GM12878 (cell line): ENCODE measurements at regions of chr6 and their contacts with region 1.

Region 1: DNA sequence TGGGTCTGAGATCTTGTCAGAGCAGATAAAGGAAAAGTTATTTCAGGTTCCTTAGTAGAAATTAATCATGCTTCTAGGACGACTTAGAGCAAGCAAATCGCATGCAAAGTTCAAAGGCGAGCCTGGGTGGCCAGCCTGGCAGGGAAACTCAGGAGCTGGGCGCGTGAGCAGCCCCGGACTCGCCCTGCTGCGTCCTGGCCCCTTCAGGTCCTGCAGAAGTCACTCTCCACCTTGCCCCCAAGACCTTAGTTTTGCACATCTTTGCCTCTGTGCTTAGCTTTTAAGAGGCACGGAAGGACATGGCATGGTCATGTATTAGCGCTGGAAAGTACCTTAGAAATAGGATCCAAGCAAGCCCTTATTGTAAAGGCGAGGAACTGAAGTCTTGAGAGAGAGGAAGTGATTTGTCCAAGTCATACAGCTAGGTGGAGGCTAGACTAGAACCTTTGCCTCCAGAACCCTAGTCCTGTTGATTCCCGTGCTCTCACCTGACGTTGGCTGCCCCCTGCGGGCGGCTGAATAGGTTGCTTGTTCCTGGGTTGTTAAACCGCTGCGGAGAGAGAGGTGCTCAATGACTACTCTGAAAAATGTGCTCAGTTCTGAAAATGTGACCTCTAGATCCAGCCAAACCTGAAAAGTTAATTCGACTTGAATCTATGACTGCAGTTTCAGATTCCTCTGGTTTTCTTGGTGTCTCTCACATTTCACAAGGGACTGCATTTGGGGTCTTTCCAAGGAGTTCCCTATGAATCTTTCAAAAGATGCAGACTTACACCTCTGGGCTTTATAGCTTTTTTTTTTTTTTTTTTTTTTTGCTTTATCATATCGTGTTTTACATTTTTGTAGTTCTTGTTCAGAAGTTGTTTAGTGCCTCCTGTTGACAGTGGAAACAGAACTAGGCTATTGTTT is 2.7 kb downstream of the MYB start:
- DNase-seq: no peak
- ATAC-seq: peak; percentile 62
- H3K4me3 ChIP-seq: peak overlapping the region; percentile 89
- H3K27ac ChIP-seq: peak overlapping the region; percentile 99
- H3K4me1 ChIP-seq: peaks cover 16% of the 10 kb centered on the region
- H3K27me3 ChIP-seq: no peaks in the 10 kb centered on the region
- CTCF ChIP-seq: peak; percentile 71 to 91 (median 79); a peak in 5 of 6 replicates
- EP300 ChIP-seq: no peak; a peak in 1 of 4 replicates
- POLR2A ChIP-seq: peak; percentile 12
- RAD21 ChIP-seq: peak; percentile 90

Region 2: GRCh38 chr6:135008072-135008940 is 175.5 kb before region 1 on chr6:
- CTCF ChIA-PET with region 1: interaction called, 12 read pairs
- POLR2A ChIA-PET with region 1: interaction called, 4 read pairs
- RAD21 ChIA-PET with region 1: interaction called, 14 read pairs
- SMC1A ChIA-PET with region 1: interaction called, 25 read pairs
- in situ Hi-C with region 1: loop called (anchors 5 kb)
- intact Hi-C with region 1: loop called (anchors 2 kb)
- DNase-seq: peak; percentile 56
- ATAC-seq: peak; percentile 91
- H3K4me3 ChIP-seq: 0 out of 2 replicates have a peak overlapping the region, but pooled peaks have one; percentile 16
- H3K27ac ChIP-seq: peak overlapping the region; percentile 64
- H3K4me1 ChIP-seq: peaks cover 28% of the 10 kb centered on the region
- H3K27me3 ChIP-seq: no peaks in the 10 kb centered on the region
- CTCF ChIP-seq: no peak
- EP300 ChIP-seq: peak; percentile 43 to 66; a peak in 2 of 4 replicates
- POLR2A ChIP-seq: no peak
- RAD21 ChIP-seq: no peak

Region 3: GRCh38 chr6:135054569-135055498 is 129.0 kb before region 1 on chr6 and contains the start of gene HBS1L:
- CTCF ChIA-PET with region 1: interaction called, 14 read pairs
- POLR2A ChIA-PET with region 1: interaction called, 8 read pairs
- RAD21 ChIA-PET with region 1: interaction called, 5 read pairs
- SMC1A ChIA-PET with region 1: interaction called, 8 read pairs
- in situ Hi-C with region 1: no loop called
- intact Hi-C with region 1: loop called (anchors 5 kb)
- DNase-seq: peak; percentile 98
- ATAC-seq: peak; percentile 98
- H3K4me3 ChIP-seq: peak within 1 kb of the TSS; percentile 89
- H3K27ac ChIP-seq: peak within 1 kb of the TSS; percentile 94
- H3K4me1 ChIP-seq: no peaks in the 10 kb centered on the region
- H3K27me3 ChIP-seq: no peaks in the 10 kb centered on the region
- CTCF ChIP-seq: no peak
- EP300 ChIP-seq: no peak; a peak in 1 of 4 replicates
- POLR2A ChIP-seq: peak; percentile 96
- RAD21 ChIP-seq: no peak
- polyA plus RNA-seq, gene HBS1L: 58.7 to 83.6 TPM

Region 4: DNA sequence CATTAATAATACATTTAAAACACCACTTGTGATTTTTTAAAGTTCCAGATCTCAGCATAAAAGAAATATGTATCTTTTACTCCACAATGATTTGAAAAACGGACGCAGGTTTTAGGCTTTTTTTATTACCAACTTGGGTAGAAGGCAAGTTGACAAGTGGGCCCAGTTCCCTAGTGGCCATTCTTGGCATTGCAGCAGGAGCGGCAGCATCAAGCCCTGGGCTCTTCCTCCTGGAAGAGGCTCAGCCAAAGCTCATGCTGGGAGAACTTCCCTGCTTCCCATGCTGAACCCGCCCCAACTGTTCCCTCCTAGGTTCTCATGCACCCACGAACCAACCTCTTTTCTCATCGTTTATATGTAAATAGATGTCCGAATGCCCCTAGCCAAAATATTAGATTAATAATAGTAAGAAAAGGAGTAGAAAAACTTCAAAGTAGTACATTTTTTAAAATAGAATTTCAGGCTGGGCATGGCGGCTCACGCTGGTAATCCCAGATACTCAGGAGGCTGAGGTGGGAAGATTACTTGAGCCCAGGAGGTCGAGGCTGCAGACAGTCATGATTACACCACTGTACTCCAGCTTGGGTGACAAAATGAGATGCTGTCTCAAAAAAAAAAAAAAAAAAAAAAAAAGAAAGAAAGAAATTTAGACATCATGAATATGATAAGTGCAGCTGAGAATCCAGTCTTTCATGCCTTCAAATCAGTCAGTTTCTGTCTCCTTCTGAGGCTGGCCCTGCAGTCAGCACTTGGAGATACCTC is 20.9 kb before region 1 on chr6:
- CTCF ChIA-PET with region 1: interaction called, 128 read pairs
- POLR2A ChIA-PET with region 1: interaction called, 52 read pairs
- RAD21 ChIA-PET with region 1: interaction called, 98 read pairs
- SMC1A ChIA-PET with region 1: interaction called, 55 read pairs
- in situ Hi-C with region 1: no loop called
- intact Hi-C with region 1: loop called (anchors 1 kb)
- DNase-seq: no peak
- ATAC-seq: peak; percentile 65
- H3K4me3 ChIP-seq: peak overlapping the region; percentile 49; the same call in 1 of the 2 replicates
- H3K27ac ChIP-seq: peak overlapping the region; percentile 75
- H3K4me1 ChIP-seq: peaks cover 28% of the 10 kb centered on the region
- H3K27me3 ChIP-seq: no peaks in the 10 kb centered on the region
- CTCF ChIP-seq: peak; percentile 64 to 93 (median 93)
- EP300 ChIP-seq: no peak
- POLR2A ChIP-seq: no peak; the same call in 1 of the 2 replicates
- RAD21 ChIP-seq: peak; percentile 51

Region 5: DNA sequence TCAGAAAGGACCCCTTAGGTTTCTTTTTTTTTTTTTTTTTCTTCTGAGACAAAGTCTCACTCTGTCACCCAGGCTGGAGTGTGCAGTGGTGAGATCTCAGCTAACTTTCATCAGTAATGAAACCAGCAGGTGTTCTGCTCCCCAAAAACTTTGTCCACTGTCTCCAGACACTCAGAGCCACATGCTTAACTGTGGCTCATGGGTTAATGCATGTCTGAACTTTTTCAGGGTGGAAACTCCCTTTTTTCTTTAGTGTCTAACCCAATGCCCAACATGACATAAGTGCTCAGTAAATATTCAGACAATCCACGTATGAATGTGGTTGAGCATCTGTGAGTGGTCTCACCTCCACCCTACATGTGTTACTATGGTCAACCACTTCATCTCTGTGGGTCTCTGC is 42.8 kb after region 1 on chr6:
- CTCF ChIA-PET with region 1: interaction called, 5 read pairs
- POLR2A ChIA-PET with region 1: no interaction called
- RAD21 ChIA-PET with region 1: interaction called, 4 read pairs
- SMC1A ChIA-PET with region 1: interaction called, 4 read pairs
- in situ Hi-C with region 1: no loop called
- intact Hi-C with region 1: loop called (anchors 1 kb)
- DNase-seq: peak; percentile 66
- ATAC-seq: peak; percentile 83
- H3K4me3 ChIP-seq: no peak overlapping the region
- H3K27ac ChIP-seq: no peak overlapping the region
- H3K4me1 ChIP-seq: peaks cover 26% of the 10 kb centered on the region
- H3K27me3 ChIP-seq: no peaks in the 10 kb centered on the region
- CTCF ChIP-seq: no peak
- EP300 ChIP-seq: peak; percentile 76 to 79; a peak in 3 of 4 replicates
- POLR2A ChIP-seq: no peak
- RAD21 ChIP-seq: 0 out of 2 replicates have a peak, but pooled peaks have one; percentile 4

Region 6: DNA sequence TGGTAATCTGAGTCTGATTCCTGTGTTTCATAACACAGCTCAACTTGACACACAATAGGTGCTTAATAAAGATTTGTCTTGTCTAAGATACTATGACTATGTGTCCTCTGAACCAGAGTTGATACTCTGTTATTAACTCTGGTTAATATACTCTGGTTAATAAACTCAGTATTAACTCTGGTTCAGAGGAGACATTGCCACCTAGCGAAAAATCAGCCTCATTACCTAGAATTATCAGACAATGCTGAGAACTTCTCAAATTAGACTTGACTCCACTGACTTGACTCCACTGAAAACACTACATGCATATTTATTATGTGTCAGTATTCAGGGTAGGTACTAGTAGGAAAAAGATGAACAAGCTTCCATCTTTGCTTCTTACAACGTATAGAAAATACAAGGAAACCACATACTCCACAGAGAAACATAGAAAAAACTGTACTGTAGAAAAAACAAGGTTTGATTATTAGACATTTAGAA is 239.9 kb after region 1 on chr6:
- CTCF ChIA-PET with region 1: interaction called, 16 read pairs
- POLR2A ChIA-PET with region 1: no interaction called
- RAD21 ChIA-PET with region 1: interaction called, 4 read pairs
- SMC1A ChIA-PET with region 1: interaction called, 22 read pairs
- in situ Hi-C with region 1: no loop called
- intact Hi-C with region 1: loop called (anchors 1 kb)
- DNase-seq: peak; percentile 16
- ATAC-seq: peak; percentile 97
- H3K4me3 ChIP-seq: no peak overlapping the region
- H3K27ac ChIP-seq: no peak overlapping the region
- H3K4me1 ChIP-seq: peaks cover 4% of the 10 kb centered on the region; the same call in 1 of the 2 replicates
- H3K27me3 ChIP-seq: no peaks in the 10 kb centered on the region
- CTCF ChIP-seq: peak; percentile 61 to 80 (median 68)
- EP300 ChIP-seq: no peak
- POLR2A ChIP-seq: no peak
- RAD21 ChIP-seq: peak; percentile 88